ENCODE measurements at regions of chr11 and their contacts with region 1.

Region 1: GRCh38 chr11:14519917-14520746 is at the start of gene PSMA1:
- DNase-seq: peak; percentile 86 to 93 (median 91)
- H3K4me3 ChIP-seq: peak within 1 kb of the TSS; percentile 95
- H3K27ac ChIP-seq: peak within 1 kb of the TSS in 1 of 2 donors; percentile 63
- H3K4me1 ChIP-seq: no peaks in the 10 kb centered on the region
- H3K27me3 ChIP-seq: no peaks in the 10 kb centered on the region
- CTCF ChIP-seq: peak; percentile 30 to 77 (median 73)
- EP300 ChIP-seq: no peak
- POLR2A ChIP-seq: peak; percentile 41
- total RNA-seq, gene PSMA1: 67.1 to 112 (median 96.3) TPM

Region 2: DNA sequence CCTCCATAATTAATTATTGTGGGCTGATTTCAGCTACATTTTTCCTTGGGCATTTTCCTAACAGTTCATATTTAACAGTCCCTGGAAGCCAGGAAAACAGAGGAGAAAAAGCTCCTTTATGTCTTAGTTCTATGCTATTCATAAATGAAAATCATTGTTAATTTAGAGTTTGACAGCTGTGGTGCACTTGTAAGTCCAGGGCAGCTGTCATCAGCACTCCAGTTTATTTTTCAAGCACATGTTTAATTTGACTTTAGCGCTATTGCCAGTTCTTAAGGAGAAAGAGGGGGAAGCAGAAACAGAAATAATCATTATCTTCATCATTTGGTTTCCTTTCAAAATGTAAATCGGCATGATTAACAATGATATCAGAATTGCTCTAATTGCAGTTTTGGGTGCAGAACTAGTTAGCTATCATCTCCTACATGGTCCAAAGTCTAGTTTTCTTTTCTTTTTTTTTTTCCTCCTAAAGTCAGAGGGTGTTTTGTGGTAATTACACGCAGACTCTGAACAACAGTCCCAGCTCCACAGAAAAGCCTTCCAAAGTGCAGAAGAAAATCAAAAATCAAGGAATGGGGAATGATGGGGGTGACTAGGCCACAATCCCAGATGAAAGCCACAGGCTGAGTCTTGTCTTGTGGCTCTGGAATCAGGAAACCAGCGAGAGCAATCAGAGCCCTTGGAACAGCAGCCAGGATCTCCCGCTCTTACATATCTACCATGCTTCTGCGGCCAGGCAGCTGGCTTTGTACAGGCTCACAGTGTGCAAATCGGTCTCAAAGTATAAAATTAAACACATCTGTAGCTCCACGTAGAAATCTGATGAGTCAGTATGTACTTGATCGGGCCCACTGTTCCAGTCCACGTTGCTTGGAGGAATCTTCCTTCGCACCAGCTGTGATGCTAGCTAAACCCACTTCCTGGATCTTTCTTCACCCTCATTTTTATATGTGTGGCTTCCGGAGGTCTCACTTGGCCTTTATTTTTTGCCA is 465.7 kb before region 1 on chr11:
- intact Hi-C with region 1: no loop called
- DNase-seq: no peak
- H3K4me3 ChIP-seq: no peak overlapping the region
- H3K27ac ChIP-seq: no peak overlapping the region
- H3K4me1 ChIP-seq: no peaks in the 10 kb centered on the region
- H3K27me3 ChIP-seq: no peaks in the 10 kb centered on the region
- CTCF ChIP-seq: no peak
- EP300 ChIP-seq: no peak
- POLR2A ChIP-seq: no peak

Region 3: DNA sequence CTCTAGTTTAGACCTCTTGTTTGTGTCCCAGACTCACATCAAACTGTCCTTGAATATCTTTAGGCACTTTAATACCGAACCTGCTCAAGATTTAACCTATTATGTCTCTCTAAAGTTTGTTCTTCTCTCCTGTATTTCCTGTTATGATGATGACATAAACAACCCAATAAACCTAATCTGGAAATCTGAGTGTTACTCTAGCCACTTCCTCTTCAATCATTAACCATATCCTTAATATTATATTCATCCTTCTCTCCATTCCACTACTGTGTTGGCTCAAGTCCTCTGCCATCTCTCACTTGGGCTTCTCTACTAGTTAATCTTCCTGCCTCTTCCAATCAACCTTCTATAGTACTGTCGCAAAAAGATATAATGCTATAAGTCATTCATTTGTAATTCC is 56.5 kb before region 1 on chr11:
- intact Hi-C with region 1: loop called in 1 of 4 experiments (anchors 5 kb)
- DNase-seq: no peak
- H3K4me3 ChIP-seq: no peak overlapping the region
- H3K27ac ChIP-seq: no peak overlapping the region
- H3K4me1 ChIP-seq: no peaks in the 10 kb centered on the region
- H3K27me3 ChIP-seq: no peaks in the 10 kb centered on the region
- CTCF ChIP-seq: no peak
- EP300 ChIP-seq: no peak
- POLR2A ChIP-seq: no peak

Region 4: GRCh38 chr11:14756349-14756748 is 236.2 kb after region 1 on chr11:
- intact Hi-C with region 1: no loop called
- DNase-seq: no peak
- H3K4me3 ChIP-seq: no peak overlapping the region
- H3K27ac ChIP-seq: no peak overlapping the region
- H3K4me1 ChIP-seq: no peaks in the 10 kb centered on the region
- H3K27me3 ChIP-seq: no peaks in the 10 kb centered on the region
- CTCF ChIP-seq: no peak
- EP300 ChIP-seq: no peak
- POLR2A ChIP-seq: no peak

Region 5: GRCh38 chr11:14773755-14774154 is 253.6 kb after region 1 on chr11:
- intact Hi-C with region 1: no loop called
- DNase-seq: no peak
- H3K4me3 ChIP-seq: no peak overlapping the region
- H3K27ac ChIP-seq: no peak overlapping the region
- H3K4me1 ChIP-seq: no peaks in the 10 kb centered on the region
- H3K27me3 ChIP-seq: no peaks in the 10 kb centered on the region
- CTCF ChIP-seq: no peak
- EP300 ChIP-seq: no peak
- POLR2A ChIP-seq: no peak

Region 6: GRCh38 chr11:14892036-14892567 is 372.0 kb after region 1 on chr11 and contains the start of gene CYP2R1:
- intact Hi-C with region 1: loop called in 1 of 4 experiments (anchors 10 kb)
- DNase-seq: peak; percentile 88 to 94 (median 92)
- H3K4me3 ChIP-seq: peak within 1 kb of the TSS; percentile 65
- H3K27ac ChIP-seq: peak within 1 kb of the TSS; percentile 63 to 78
- H3K4me1 ChIP-seq: peaks cover 2% of the 10 kb centered on the region
- H3K27me3 ChIP-seq: no peaks in the 10 kb centered on the region
- CTCF ChIP-seq: no peak
- EP300 ChIP-seq: no peak
- POLR2A ChIP-seq: peak; percentile 10
- total RNA-seq, gene CYP2R1: 6.0 to 8.5 (median 6.4) TPM

Measured in ovary (tissue), 10 donors.